CD8-positive, alpha-beta T cell (primary cell): ENCODE measurements at regions of chr18 and their contacts with region 1.

Region 1: DNA sequence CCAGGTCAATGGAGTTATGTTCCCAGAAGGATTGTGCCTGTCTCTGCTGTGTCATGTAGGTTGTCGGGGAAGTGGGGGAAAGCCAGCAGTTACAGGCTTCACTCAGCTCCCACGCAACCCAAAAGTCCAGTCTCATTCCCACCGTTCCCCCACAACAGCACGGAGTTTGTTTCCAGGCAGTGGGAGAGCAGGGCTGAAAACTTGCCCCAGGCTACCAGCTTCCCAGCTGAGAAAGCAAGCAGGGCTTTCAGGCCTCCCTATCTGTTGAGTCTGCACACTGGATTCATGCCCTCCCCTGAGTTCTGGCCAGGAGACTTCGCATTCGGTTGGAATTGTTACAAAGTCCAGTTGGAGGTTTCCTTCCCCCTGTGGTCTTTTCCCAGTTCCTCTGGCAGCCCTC is 76.3 kb downstream of the TMX3 start:
- DNase-seq: no peak
- ATAC-seq: no peak
- H3K4me3 ChIP-seq: no peak overlapping the region
- H3K4me3 Mint-ChIP-seq: no peak overlapping the region
- H3K27ac ChIP-seq: no peak overlapping the region
- H3K27ac Mint-ChIP-seq: no peak overlapping the region
- H3K4me1 ChIP-seq: no peaks in the 10 kb centered on the region
- H3K4me1 Mint-ChIP-seq: no peaks in the 10 kb centered on the region
- H3K27me3 ChIP-seq: no peaks in the 10 kb centered on the region
- H3K27me3 Mint-ChIP-seq: peaks cover 17% of the 10 kb centered on the region
- CTCF ChIP-seq: no peak

Region 2: GRCh38 chr18:67766930-67767329 is 871.7 kb before region 1 on chr18:
- CTCF ChIA-PET with region 1: no interaction called
- POLR2A ChIA-PET with region 1: no interaction called
- intact Hi-C with region 1: loop called in 1 of 2 experiments (anchors 10 kb)
- DNase-seq: no peak
- ATAC-seq: no peak
- H3K4me3 ChIP-seq: no peak overlapping the region
- H3K4me3 Mint-ChIP-seq: no peak overlapping the region
- H3K27ac ChIP-seq: no peak overlapping the region
- H3K27ac Mint-ChIP-seq: no peak overlapping the region
- H3K4me1 ChIP-seq: no peaks in the 10 kb centered on the region
- H3K4me1 Mint-ChIP-seq: no peaks in the 10 kb centered on the region
- H3K27me3 ChIP-seq: no peaks in the 10 kb centered on the region
- H3K27me3 Mint-ChIP-seq: no peaks in the 10 kb centered on the region
- CTCF ChIP-seq: no peak